ENCODE measurements at regions of chr9 and their contacts with region 1.

Region 1: GRCh38 chr9:35116898-35117551 is 1.4 kb upstream of the ATOSB start:
- DNase-seq: peak; percentile 86
- ATAC-seq: peak; percentile 84
- H3K4me3 ChIP-seq: peak overlapping the region; percentile 78 to 96 (median 79)
- H3K27ac ChIP-seq: peak overlapping the region; percentile 56
- H3K4me1 ChIP-seq: peaks cover 30% of the 10 kb centered on the region
- H3K27me3 ChIP-seq: no peaks in the 10 kb centered on the region; a peak in 1 of 5 replicates
- CTCF ChIP-seq: peak; percentile 94
- EP300 ChIP-seq: no peak
- POLR2A ChIP-seq: no peak
- RAD21 ChIP-seq: peak; percentile 84

Region 2: GRCh38 chr9:35071814-35072460 is 45.1 kb before region 1 on chr9:
- CTCF ChIA-PET with region 1: no interaction called
- POLR2A ChIA-PET with region 1: interaction called, 19 read pairs
- in situ Hi-C with region 1: no loop called
- intact Hi-C with region 1: no loop called
- DNase-seq: peak; percentile 85
- ATAC-seq: peak; percentile 89
- H3K4me3 ChIP-seq: peak overlapping the region; percentile 92 to 99 (median 93)
- H3K27ac ChIP-seq: peak overlapping the region; percentile 100
- H3K4me1 ChIP-seq: peaks cover 37% of the 10 kb centered on the region
- H3K27me3 ChIP-seq: no peaks in the 10 kb centered on the region; a peak in 1 of 5 replicates
- CTCF ChIP-seq: peak; percentile 69
- EP300 ChIP-seq: peak in 1 of 2 experiments; percentile 46; a peak in 1 of 4 replicates
- POLR2A ChIP-seq: peak in 1 of 2 experiments; percentile 79; a peak in 2 of 4 replicates
- RAD21 ChIP-seq: peak; percentile 56

Region 3: GRCh38 chr9:35161713-35162604 is 44.9 kb after region 1 on chr9 and contains the start of gene UNC13B:
- CTCF ChIA-PET with region 1: no interaction called
- POLR2A ChIA-PET with region 1: interaction called, 14 read pairs
- in situ Hi-C with region 1: no loop called
- intact Hi-C with region 1: loop called (anchors 1 kb)
- DNase-seq: peak; percentile 93
- ATAC-seq: peak; percentile 97
- H3K4me3 ChIP-seq: peak within 1 kb of the TSS; percentile 78 to 98 (median 85)
- H3K27ac ChIP-seq: peak within 1 kb of the TSS; percentile 75
- H3K4me1 ChIP-seq: peaks cover 43% of the 10 kb centered on the region
- H3K27me3 ChIP-seq: no peaks in the 10 kb centered on the region; a peak in 1 of 5 replicates
- CTCF ChIP-seq: peak; percentile 59
- EP300 ChIP-seq: no peak
- POLR2A ChIP-seq: peak; percentile 82 to 84
- RAD21 ChIP-seq: peak; percentile 32
- total RNA-seq, gene UNC13B: 18.3 and 23.6 TPM in 2 replicates

Region 4: DNA sequence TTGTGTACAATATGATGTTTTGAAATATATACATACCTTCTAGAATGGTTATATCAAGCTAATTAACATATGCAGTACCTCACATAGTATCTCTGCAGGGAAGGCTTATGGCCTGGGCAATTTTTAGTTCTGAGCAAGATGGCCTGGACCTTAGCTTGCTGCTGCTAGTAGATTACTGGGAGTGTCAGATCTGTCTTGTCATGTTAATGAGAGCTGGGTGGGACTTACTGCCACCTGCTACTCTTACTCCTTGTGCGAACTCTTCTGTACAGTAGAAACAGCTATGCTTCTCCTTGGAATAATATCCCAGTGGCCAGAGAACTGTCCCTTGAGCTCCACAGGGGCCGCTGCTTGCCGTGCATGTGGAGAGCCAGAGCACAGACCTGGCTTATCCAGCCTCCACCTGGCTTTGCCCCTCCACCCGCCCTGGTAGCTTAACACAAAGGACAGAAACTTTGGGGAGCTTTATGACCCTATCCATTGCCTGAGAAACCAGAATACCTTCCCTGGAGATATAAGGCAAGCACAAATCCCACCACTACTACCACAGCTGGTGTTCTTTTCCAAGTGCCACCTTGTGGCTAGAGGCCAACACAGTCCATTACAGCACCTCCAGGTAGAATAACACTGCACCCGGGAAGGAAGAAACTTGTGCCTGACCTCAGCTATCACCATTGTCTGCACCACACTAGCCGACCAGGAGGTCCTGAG is 298.5 kb after region 1 on chr9:
- CTCF ChIA-PET with region 1: no interaction called
- POLR2A ChIA-PET with region 1: interaction called, 3 read pairs
- in situ Hi-C with region 1: no loop called
- intact Hi-C with region 1: loop called (anchors 1 kb)
- DNase-seq: peak; percentile 41
- ATAC-seq: peak; percentile 98
- H3K4me3 ChIP-seq: no peak overlapping the region
- H3K27ac ChIP-seq: no peak overlapping the region
- H3K4me1 ChIP-seq: peaks cover 19% of the 10 kb centered on the region
- H3K27me3 ChIP-seq: no peaks in the 10 kb centered on the region
- CTCF ChIP-seq: peak; percentile 58
- EP300 ChIP-seq: no peak
- POLR2A ChIP-seq: no peak
- RAD21 ChIP-seq: no peak

Region 5: GRCh38 chr9:35481347-35481975 is 364.4 kb after region 1 on chr9:
- CTCF ChIA-PET with region 1: interaction called, 14 read pairs
- POLR2A ChIA-PET with region 1: no interaction called
- in situ Hi-C with region 1: loop called (anchors 5 kb)
- intact Hi-C with region 1: loop called (anchors 1 kb)
- DNase-seq: peak; percentile 54
- ATAC-seq: peak; percentile 75
- H3K4me3 ChIP-seq: no peak overlapping the region
- H3K27ac ChIP-seq: no peak overlapping the region
- H3K4me1 ChIP-seq: peaks cover 7% of the 10 kb centered on the region; the same call in 1 of the 2 replicates
- H3K27me3 ChIP-seq: no peaks in the 10 kb centered on the region
- CTCF ChIP-seq: peak; percentile 79
- EP300 ChIP-seq: no peak
- POLR2A ChIP-seq: no peak
- RAD21 ChIP-seq: peak; percentile 64; the same call in 1 of the 2 replicates

Measured in HepG2 (cell line).